ENCODE measurements at regions of chr1 and their contacts with region 1.

Region 1: GRCh38 chr1:26035959-26036755 is 9.8 kb downstream of the SLC30A2 start:
- DNase-seq: peak; percentile 86
- H3K4me3 ChIP-seq: peak overlapping the region; percentile 58 to 80 (median 75)
- H3K27ac ChIP-seq: peak overlapping the region; percentile 84 to 91 (median 88)
- H3K4me1 ChIP-seq: peaks cover 0 to 15% (median 11%) of the 10 kb centered on the region in 4 donors
- H3K27me3 ChIP-seq: peaks cover 0 to 7% (median 0%) of the 10 kb centered on the region in 3 donors
- CTCF ChIP-seq: peak; percentile 97 to 100 (median 99)
- EP300 ChIP-seq: no peak
- POLR2A ChIP-seq: no peak

Region 2: DNA sequence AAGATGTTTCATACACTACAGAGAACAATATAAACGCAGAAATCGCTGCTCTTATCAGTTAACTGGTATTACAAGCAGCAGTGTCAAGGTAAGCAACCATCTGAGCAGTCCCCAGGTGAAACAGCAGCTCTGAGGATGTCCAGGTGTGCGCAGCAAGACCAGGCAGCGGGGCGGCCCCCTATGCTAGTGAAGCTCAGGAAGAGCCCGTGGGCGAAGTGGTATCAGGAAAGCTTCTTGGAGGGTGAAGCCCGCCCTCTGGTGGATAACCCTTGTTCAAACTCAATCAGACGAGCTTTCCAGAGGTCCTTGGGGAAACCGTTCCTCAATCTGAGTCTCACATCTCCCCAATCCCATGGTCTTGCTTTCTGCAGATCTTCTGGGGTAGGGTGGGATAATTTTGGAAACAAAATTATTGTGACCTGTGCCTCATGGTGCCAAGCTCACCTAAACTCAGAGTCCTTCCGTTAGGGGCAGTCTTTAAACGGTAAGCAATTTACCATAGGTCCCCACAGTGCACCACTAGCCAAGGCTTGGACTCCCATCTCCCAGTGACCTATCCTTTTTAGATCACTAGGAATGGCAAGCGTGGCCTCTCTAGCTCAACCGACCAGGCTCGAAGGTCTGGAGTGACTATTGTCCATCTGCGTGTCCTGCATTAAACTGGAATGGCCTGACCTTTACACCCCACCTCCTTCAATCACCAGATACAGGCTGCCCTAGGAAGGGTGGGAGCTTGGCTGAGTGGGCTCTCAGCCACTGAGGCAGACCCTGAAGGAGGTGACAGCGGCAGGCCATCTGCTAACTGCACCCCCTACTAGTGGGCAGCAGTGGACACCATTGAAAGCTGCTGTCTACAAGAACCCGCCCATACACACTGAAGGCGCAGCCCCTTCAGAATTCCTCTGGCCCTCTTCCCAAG is 109.1 kb after region 1 on chr1:
- intact Hi-C with region 1: loop called (anchors 1 kb)
- DNase-seq: peak; percentile 89
- H3K4me3 ChIP-seq: no peak overlapping the region
- H3K27ac ChIP-seq: no peak overlapping the region
- H3K4me1 ChIP-seq: peaks cover 0 to 5% (median 0%) of the 10 kb centered on the region in 4 donors
- H3K27me3 ChIP-seq: no peaks in the 10 kb centered on the region
- CTCF ChIP-seq: peak; percentile 56 to 70 (median 68)
- EP300 ChIP-seq: no peak
- POLR2A ChIP-seq: no peak

Region 3: GRCh38 chr1:26161415-26162219 is 125.5 kb after region 1 on chr1:
- intact Hi-C with region 1: loop called (anchors 5 kb)
- DNase-seq: no peak
- H3K4me3 ChIP-seq: peak overlapping the region; percentile 29 to 59 (median 54)
- H3K27ac ChIP-seq: peak overlapping the region; percentile 34 to 68 (median 50)
- H3K4me1 ChIP-seq: peaks cover 0 to 28% (median 19%) of the 10 kb centered on the region in 4 donors
- H3K27me3 ChIP-seq: peaks cover 4 to 16% (median 10%) of the 10 kb centered on the region in 3 donors
- CTCF ChIP-seq: no peak
- EP300 ChIP-seq: no peak
- POLR2A ChIP-seq: no peak

Region 4: DNA sequence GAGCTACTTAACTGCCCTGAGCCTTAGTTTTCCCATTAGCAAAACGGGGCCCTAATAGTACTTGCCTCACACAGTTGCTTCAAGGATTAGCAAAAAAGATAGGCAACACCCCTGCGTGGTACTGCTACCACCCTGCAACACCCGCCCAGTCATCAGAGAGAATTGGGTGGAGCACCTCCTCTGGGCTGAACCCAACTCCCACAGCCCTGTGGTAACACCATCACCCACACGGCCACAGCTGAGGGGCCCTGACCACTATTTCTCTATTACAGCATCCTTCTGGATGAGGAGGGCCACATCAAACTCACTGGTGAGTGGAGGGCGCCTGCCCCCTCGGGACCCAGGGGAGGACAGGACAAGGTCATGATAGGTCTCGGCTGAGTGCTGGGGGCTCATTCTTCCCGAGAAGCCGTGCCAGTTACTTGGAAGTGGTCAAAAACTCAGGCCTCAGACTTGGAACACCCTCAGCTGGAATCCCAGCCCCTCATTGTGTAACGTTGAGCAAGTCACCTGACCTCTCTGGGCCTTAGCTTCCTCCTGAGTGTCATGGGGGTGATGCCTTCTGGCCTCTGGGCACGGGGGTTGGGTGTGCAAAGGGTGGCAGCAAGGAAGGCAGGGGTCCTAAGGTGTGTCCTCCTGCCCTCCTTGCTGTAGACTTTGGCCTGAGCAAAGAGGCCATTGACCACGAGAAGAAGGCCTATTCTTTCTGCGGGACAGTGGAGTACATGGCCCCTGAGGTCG is 518.0 kb after region 1 on chr1:
- intact Hi-C with region 1: no loop called
- DNase-seq: no peak
- H3K4me3 ChIP-seq: no peak overlapping the region
- H3K27ac ChIP-seq: no peak overlapping the region
- H3K4me1 ChIP-seq: no peaks in the 10 kb centered on the region
- H3K27me3 ChIP-seq: no peaks in the 10 kb centered on the region
- CTCF ChIP-seq: no peak
- EP300 ChIP-seq: no peak
- POLR2A ChIP-seq: no peak

Measured in sigmoid colon (tissue), 7 donors.